Vagina (tissue), 2 donors: ENCODE measurements at regions of chr6 and their contacts with region 1.

Region 1: GRCh38 chr6:33417903-33418689 is at the start of gene CUTA:
- DNase-seq: peak; percentile 100
- H3K4me3 ChIP-seq: peak within 1 kb of the TSS; percentile 60 to 71
- H3K27ac ChIP-seq: peak within 1 kb of the TSS; percentile 98
- H3K4me1 ChIP-seq: peaks cover 54% of the 10 kb centered on the region
- H3K27me3 ChIP-seq: no peaks in the 10 kb centered on the region
- CTCF ChIP-seq: peak; percentile 24 to 42 (median 37)
- POLR2A ChIP-seq: peak in 1 of 2 donors; percentile 91
- total RNA-seq, gene CUTA: 73.2 TPM

Region 2: DNA sequence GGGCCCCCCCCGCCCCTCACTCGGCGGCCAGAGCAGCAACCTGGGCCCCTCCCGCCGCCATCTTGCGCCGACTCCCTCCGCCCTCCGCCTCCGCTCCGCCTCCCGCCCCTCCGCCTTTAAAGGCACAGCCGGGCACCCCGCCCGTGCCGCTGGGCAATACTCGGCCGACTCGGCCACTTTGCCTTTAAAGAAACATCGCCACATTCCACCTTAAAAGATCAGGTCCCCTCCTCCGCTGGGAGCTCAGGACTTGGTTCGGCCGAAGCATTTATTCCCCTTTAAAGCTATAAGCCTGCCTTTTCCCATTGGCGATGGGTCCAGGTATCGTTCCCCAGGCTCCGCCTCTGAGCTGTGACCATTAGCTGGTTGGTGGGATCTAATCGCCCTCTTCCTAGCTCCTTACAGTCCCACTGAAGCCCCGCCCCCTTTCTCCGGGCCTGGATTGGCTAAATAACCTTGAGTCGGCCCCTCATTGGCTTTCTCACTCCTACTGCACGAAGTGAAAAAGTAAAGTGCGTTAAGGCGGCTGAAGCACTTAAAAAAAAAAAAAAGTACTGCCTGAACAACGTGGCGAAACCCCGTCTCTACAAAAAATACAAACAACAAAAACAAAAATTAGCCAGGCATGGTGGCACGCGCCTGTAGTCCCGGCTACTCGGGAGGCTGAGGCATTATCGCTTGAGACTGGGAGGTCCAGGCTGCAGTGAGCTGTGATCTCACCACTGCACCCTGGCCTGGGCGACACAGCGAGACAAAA is 100.2 kb before region 1 on chr6 and contains the start of gene ZBTB22:
- intact Hi-C with region 1: loop called (anchors 5 kb)
- DNase-seq: peak in 1 of 2 donors; percentile 99
- H3K4me3 ChIP-seq: peak within 1 kb of the TSS; percentile 46 to 49
- H3K27ac ChIP-seq: peak within 1 kb of the TSS; percentile 87
- H3K4me1 ChIP-seq: peaks cover 72% of the 10 kb centered on the region
- H3K27me3 ChIP-seq: no peaks in the 10 kb centered on the region
- CTCF ChIP-seq: no peak
- POLR2A ChIP-seq: no peak
- total RNA-seq, gene ZBTB22: 18.4 TPM